Right cardiac atrium (tissue), 5 donors: ENCODE measurements at regions of chr15 and their contacts with region 1.

Region 1: GRCh38 chr15:63256433-63257274 is 20.8 kb upstream of the APH1B start:
- DNase-seq: no peak
- ATAC-seq: no peak
- H3K4me3 ChIP-seq: no peak overlapping the region
- H3K27ac ChIP-seq: no peak overlapping the region
- H3K4me1 ChIP-seq: no peaks in the 10 kb centered on the region
- H3K27me3 ChIP-seq: no peaks in the 10 kb centered on the region

Region 2: GRCh38 chr15:63191895-63192618 is 64.6 kb before region 1 on chr15:
- intact Hi-C with region 1: loop called in 1 of 4 experiments (anchors 10 kb)
- DNase-seq: no peak
- ATAC-seq: no peak
- H3K4me3 ChIP-seq: no peak overlapping the region
- H3K27ac ChIP-seq: no peak overlapping the region
- H3K4me1 ChIP-seq: peaks cover 3% of the 10 kb centered on the region
- H3K27me3 ChIP-seq: no peaks in the 10 kb centered on the region